OCI-LY7 (cell line): ENCODE measurements at regions of chr12 and their contacts with region 1.

Region 1: GRCh38 chr12:5428332-5429221 is 3.3 kb upstream of the NTF3 start:
- DNase-seq: peak; percentile 77
- H3K4me3 ChIP-seq: peak overlapping the region; percentile 93
- H3K27ac ChIP-seq: peak overlapping the region; percentile 56
- H3K4me1 ChIP-seq: peaks cover 36% of the 10 kb centered on the region
- CTCF ChIP-seq: peak; percentile 95

Region 2: DNA sequence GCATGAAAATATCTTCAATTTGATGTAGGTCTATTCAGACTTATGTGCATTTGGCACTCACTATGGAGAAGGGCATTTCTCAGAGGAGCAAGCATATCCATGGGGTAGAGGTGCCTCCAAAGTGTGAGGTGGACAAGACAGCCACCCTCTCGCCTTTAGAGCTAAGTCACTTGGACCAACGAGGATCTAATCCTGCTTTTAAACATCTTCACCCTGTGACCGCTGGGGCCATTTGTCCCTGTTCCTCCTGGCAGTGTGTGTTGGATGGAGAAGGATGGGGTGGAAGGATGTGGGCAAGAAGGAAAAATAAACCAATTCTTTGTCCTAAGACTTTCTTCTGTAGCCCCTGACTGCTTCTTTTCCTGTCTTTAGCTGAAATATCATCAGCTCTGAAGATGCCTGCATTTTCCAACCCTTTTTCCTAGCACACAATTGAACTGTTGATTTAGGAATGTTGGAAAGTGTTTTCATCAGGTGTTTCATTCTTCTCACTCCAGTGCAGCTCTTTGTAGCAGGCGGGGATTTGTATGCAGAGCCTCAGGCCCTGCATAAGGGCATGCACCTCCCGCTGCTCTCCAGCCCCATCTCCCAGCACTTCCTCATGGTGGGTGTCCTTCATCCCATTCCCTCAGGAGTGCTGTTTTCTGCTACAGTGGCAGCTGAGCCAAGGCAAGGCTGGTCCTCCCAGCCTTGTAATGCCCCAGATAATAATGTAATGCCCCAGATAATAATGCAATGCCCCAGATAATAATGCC is 988.2 kb before region 1 on chr12:
- CTCF ChIA-PET with region 1: interaction called, 10 read pairs
- POLR2A ChIA-PET with region 1: no interaction called
- intact Hi-C with region 1: no loop called
- DNase-seq: no peak
- H3K4me3 ChIP-seq: no peak overlapping the region
- H3K27ac ChIP-seq: no peak overlapping the region
- H3K4me1 ChIP-seq: peaks cover 5% of the 10 kb centered on the region
- CTCF ChIP-seq: no peak

Region 3: DNA sequence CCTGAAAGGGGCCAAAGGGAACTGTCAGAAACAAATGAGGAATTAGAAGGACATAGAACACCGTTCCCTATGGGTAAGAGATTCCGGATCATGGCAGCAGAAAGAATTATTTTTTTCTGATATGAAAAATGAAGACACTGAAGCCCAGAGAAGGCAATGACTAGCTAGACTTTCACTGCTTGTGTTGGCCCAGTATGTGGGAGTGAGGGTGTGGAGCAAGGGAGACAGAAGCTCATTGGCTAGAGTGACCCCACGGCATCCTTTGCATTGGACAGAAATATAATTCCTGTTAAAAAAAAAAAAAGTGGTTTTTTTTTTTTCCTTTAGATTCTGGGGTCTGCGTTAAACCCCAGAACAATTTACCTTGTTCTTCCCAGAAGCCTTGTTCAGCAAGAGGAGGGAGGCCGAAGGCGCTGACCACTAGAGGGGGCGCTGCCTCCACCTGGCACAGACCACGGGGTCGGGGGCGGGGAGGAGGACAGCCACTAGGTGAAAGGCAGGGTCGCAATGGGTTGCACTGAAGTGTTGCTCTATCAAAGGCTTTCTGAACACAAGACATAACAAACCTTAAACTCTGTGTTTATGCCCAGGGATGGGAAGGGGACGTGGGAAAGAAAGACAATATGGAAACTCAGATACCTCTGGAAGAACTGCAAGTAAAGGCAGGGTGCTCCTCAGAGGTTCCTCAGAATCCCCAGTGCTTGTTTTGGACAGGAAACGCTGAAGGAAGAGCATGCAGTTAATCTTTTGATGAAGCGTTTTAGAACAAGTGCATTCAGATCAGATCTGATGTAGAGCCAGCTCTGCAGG is 228.1 kb before region 1 on chr12:
- CTCF ChIA-PET with region 1: no interaction called
- POLR2A ChIA-PET with region 1: no interaction called
- intact Hi-C with region 1: loop called (anchors 5 kb)
- DNase-seq: peak; percentile 48
- H3K4me3 ChIP-seq: no peak overlapping the region
- H3K27ac ChIP-seq: no peak overlapping the region
- H3K4me1 ChIP-seq: no peaks in the 10 kb centered on the region
- CTCF ChIP-seq: peak; percentile 86

Region 4: DNA sequence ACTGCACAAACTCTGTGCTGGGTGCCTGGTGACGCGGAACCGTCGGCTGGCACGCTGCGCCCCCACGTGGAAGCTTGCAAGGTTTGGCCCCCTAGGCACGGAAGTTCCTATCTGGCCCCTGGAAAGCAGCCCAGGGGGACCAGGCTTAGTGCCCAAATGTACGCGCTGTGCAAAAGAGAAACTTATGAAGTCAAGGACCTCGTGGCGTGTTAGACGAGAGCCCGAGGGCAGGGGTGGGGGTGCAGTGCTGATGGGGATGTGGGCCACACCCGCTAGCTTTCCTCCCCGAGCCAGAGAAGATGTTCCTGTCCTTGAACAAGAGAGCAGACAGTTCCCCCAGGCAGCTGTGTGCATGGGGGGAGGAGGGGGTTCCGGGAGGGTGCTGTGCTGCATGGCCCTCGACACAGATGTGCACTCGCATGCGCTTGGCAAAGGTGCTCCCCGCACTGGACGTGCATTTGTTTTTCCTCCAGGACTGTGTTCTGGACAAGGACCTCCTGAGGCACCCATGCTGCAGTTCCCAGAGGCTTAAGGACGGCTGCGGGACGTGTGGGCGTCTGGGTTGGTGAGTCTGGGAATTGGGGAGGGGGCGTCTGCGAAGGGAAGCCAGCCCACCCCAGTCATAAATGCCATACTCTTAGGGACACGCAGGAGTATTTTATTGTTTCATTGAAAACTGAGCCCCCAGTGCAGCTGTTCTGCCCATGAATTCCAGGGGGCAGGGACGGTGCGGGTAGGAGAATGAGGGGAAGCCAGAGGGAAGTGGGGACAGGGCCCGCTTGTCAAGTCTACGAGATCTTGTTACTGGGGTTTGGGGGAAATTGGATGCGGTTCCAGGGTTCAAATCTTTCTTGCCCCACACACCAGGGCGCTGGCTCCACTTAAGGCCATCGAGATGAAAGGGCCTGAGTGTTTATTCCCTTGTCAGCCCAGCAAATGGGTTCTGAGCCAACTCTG is 83.3 kb after region 1 on chr12:
- CTCF ChIA-PET with region 1: interaction called, 17 read pairs
- POLR2A ChIA-PET with region 1: interaction called, 7 read pairs
- intact Hi-C with region 1: loop called (anchors 1 kb)
- DNase-seq: peak; percentile 81
- H3K4me3 ChIP-seq: peak overlapping the region; percentile 24
- H3K27ac ChIP-seq: no peak overlapping the region
- H3K4me1 ChIP-seq: peaks cover 13% of the 10 kb centered on the region
- CTCF ChIP-seq: peak; percentile 95

Region 5: GRCh38 chr12:5556039-5556614 is 127.5 kb after region 1 on chr12:
- CTCF ChIA-PET with region 1: no interaction called
- POLR2A ChIA-PET with region 1: no interaction called
- intact Hi-C with region 1: loop called (anchors 1 kb)
- DNase-seq: peak; percentile 53
- H3K4me3 ChIP-seq: no peak overlapping the region
- H3K27ac ChIP-seq: no peak overlapping the region
- H3K4me1 ChIP-seq: no peaks in the 10 kb centered on the region
- CTCF ChIP-seq: peak; percentile 86

Region 6: GRCh38 chr12:5648692-5649359 is 220.2 kb after region 1 on chr12:
- CTCF ChIA-PET with region 1: no interaction called
- POLR2A ChIA-PET with region 1: no interaction called
- intact Hi-C with region 1: loop called (anchors 2 kb)
- DNase-seq: peak; percentile 44
- H3K4me3 ChIP-seq: no peak overlapping the region
- H3K27ac ChIP-seq: no peak overlapping the region
- H3K4me1 ChIP-seq: no peaks in the 10 kb centered on the region
- CTCF ChIP-seq: peak; percentile 73

Region 7: GRCh38 chr12:5796171-5796958 is 367.8 kb after region 1 on chr12:
- CTCF ChIA-PET with region 1: no interaction called
- POLR2A ChIA-PET with region 1: no interaction called
- intact Hi-C with region 1: loop called (anchors 2 kb)
- DNase-seq: peak; percentile 30
- H3K4me3 ChIP-seq: no peak overlapping the region
- H3K27ac ChIP-seq: no peak overlapping the region
- H3K4me1 ChIP-seq: no peaks in the 10 kb centered on the region
- CTCF ChIP-seq: peak; percentile 73

Region 8: DNA sequence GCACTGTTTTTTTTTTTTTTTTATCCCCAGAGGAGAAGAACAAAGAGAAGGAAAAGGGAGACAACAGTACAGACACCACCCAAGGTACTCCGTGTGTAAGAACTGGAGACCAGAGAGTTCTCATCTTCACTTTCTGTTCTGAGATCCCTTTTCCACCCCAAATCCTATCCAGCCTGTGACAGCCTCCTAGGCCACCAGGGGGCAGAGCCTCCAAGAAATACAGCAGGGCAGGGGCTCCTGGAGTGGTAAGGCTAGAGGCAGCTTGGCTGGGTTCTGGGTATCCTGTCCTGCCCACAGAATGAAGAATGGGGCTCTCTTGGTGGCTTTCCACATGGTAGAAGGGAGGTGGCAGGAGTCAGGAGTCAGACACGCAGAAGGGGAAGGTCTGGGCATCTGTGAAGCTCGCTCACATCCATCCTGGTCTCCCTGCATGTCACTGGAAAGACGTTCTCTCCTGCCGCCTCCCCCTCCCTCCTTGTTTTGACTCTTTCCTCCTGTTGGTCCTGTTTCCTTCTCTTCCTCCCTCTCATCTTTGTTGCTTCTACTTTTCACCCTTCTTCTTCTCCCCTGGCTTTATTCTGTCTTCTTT is 1713.6 kb after region 1 on chr12:
- CTCF ChIA-PET with region 1: no interaction called
- POLR2A ChIA-PET with region 1: no interaction called
- intact Hi-C with region 1: no loop called
- DNase-seq: peak; percentile 70
- H3K4me3 ChIP-seq: no peak overlapping the region
- H3K27ac ChIP-seq: no peak overlapping the region
- H3K4me1 ChIP-seq: no peaks in the 10 kb centered on the region
- CTCF ChIP-seq: peak; percentile 86